Activated CD8-positive, alpha-beta memory T cell treated with anti-CD3 and anti-CD28 coated beads, Interleukin-2, amount 10 ng/mL, durations not matched to agents 7 days and 5 days (primary cell): ENCODE measurements at regions of chr11 and their contacts with region 1.

Region 1: DNA sequence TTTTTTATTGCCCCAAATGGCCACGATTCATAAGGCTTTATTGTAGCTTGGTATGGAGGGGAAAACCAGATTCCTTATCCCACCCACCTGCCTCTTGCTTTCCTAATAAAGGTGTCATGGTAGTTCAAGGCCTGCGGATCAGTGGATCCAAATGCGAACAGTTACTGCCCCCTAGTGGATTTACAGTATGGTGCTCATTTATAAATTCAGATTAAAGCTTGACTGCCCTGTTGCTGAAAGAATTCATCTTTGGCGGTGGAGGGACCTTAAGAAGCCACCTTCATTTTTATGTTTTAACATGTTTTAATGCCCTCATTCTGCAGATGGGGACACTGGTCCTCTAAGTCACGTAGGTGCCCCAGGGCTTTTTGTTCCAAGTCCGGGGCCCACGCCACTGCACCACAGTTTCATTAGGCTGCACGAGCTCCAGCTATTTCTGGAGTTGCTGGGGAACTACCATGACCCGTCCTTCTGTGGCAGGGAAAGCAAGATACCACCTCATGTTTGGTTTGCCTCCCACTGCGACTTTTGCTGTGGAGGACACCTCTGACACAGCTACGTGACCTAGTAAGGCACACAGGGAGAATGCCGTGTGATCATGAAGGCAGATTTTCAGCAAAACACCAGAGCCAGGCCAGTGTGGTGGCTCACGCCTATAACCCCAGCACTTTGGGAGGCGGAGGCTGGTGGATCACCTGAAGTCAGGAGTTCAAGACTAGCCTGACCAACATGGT is 15.6 kb upstream of the INCENP start:
- DNase-seq: peak; percentile 51
- ATAC-seq: no peak
- H3K4me3 Mint-ChIP-seq: no peak overlapping the region
- H3K27ac Mint-ChIP-seq: no peak overlapping the region
- H3K4me1 Mint-ChIP-seq: peaks cover 17% of the 10 kb centered on the region
- H3K27me3 Mint-ChIP-seq: peaks cover 14% of the 10 kb centered on the region

Region 2: GRCh38 chr11:61871158-61871597 is 237.0 kb before region 1 on chr11:
- CTCF ChIA-PET with region 1: interaction called, 31 read pairs
- DNase-seq: peak; percentile 73
- ATAC-seq: peak; percentile 95
- H3K4me3 Mint-ChIP-seq: peak overlapping the region; percentile 61
- H3K27ac Mint-ChIP-seq: no peak overlapping the region
- H3K4me1 Mint-ChIP-seq: peaks cover 5% of the 10 kb centered on the region
- H3K27me3 Mint-ChIP-seq: peaks cover 4% of the 10 kb centered on the region

Region 3: GRCh38 chr11:61899146-61899841 is 208.9 kb before region 1 on chr11:
- CTCF ChIA-PET with region 1: interaction called, 190 read pairs
- DNase-seq: peak; percentile 92
- ATAC-seq: peak; percentile 94
- H3K4me3 Mint-ChIP-seq: no peak overlapping the region
- H3K27ac Mint-ChIP-seq: peak overlapping the region; percentile 55
- H3K4me1 Mint-ChIP-seq: peaks cover 6% of the 10 kb centered on the region
- H3K27me3 Mint-ChIP-seq: peaks cover 3% of the 10 kb centered on the region

Region 4: DNA sequence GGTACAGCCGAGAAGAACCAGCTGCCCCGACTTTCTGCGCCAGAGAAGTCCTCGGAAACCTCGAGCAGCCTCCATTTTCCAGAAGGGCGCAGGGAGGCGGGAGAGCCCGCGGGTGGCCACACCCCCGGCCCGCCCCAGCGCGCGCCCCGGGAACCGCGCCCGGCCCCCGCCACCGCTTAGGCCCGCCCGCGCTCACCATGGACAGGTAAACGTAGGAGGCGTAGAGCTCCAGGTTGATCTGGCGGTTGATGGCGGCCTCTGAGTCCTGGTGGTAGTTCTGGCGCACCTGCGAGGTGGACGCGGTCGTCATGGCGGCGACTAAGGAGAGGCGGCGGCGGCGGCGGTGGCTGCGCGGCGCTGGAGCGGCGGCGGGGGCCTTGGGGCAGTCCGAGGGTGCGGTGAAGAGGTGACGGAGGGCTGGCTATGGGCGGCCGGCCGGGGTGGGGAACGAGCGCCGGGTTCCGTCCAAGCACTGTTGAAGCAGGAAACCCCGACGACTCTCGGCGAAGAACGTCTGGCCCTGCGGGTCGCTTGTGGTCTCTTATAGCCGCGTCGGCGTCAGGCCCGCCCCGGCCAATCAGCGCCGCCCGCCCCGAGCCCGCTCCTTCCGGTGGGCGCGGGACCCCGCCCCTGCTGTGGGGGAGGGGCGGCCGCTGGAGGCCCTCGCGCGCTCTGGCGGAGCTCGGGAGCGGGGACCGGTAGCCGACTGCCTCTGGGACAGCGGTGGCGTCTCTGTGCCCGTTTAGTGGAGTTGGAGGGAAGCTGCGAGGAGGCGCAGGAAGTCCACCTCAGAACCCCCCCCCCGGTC is 140.9 kb before region 1 on chr11 and contains the start of gene FTH1:
- CTCF ChIA-PET with region 1: interaction called, 16 read pairs
- DNase-seq: peak; percentile 91
- ATAC-seq: peak; percentile 79
- H3K4me3 Mint-ChIP-seq: peak within 1 kb of the TSS; percentile 88
- H3K27ac Mint-ChIP-seq: peak within 1 kb of the TSS; percentile 94
- H3K4me1 Mint-ChIP-seq: peaks cover 59% of the 10 kb centered on the region
- H3K27me3 Mint-ChIP-seq: no peaks in the 10 kb centered on the region
- total RNA-seq, gene FTH1: 740 to 867 TPM

Region 5: DNA sequence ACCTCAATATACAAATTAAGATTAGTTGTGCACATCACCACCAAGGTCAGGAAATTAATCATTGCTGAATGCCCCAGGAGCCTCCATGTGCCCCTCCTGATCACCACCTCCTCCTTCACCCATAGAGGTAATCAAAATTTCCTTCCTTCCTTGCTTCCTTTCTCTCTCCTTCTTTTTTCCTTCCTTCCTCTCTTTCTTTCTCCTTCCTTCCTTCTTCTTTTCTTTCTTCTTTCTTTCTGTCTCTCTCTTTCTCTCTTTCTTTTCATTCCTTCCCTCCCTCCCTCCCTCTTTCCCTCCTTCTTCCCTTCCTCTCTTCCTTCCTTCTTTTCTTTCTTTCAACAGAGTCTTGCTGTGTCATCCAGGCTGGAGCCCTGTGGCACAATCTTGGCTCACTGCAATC is 72.9 kb before region 1 on chr11:
- CTCF ChIA-PET with region 1: no interaction called
- DNase-seq: no peak
- ATAC-seq: no peak
- H3K4me3 Mint-ChIP-seq: no peak overlapping the region
- H3K27ac Mint-ChIP-seq: no peak overlapping the region
- H3K4me1 Mint-ChIP-seq: peaks cover 2% of the 10 kb centered on the region
- H3K27me3 Mint-ChIP-seq: peaks cover 16% of the 10 kb centered on the region

Region 6: DNA sequence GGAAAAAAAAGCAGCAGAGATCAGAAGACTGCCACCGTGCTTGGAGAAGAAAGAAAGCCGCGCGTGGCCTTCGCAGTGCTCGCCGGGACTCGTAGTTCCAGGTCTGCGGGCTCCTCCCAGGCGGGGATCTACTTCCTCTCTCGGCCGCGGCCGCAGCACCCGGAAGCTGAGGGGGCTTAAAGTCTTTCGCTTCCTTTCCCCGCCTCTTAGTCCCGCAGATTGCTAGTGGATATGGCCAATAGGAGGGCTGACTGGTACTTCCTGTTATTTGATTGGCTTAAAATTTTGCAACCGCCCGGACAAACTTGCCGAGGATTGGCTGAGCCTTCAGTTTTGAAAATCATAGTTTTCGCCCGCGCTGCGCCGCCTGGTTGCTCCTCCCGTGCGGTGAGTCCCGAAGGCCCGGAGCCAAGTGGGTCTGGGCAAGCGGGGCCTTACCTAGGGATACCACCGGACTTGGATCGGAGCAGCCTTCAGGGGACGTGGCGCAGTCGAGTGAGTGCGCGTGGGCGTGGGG is 15.5 kb after region 1 on chr11 and contains the start of gene INCENP:
- CTCF ChIA-PET with region 1: interaction called, 40 read pairs
- DNase-seq: peak; percentile 97
- ATAC-seq: peak; percentile 99
- H3K4me3 Mint-ChIP-seq: peak within 1 kb of the TSS; percentile 87
- H3K27ac Mint-ChIP-seq: peak within 1 kb of the TSS; percentile 94
- H3K4me1 Mint-ChIP-seq: peaks cover 33% of the 10 kb centered on the region
- H3K27me3 Mint-ChIP-seq: peaks cover 7% of the 10 kb centered on the region
- total RNA-seq, gene INCENP: 176 to 205 TPM